ENCODE measurements at regions of chr13 and their contacts with region 1.

Region 1: GRCh38 chr13:75384879-75385707 is 96.9 kb downstream of the TBC1D4 start:
- DNase-seq: no peak
- ATAC-seq: no peak
- H3K4me3 Mint-ChIP-seq: no peak overlapping the region
- H3K27ac Mint-ChIP-seq: no peak overlapping the region
- H3K4me1 Mint-ChIP-seq: peaks cover 16% of the 10 kb centered on the region
- H3K27me3 Mint-ChIP-seq: peaks cover 3% of the 10 kb centered on the region

Region 2: DNA sequence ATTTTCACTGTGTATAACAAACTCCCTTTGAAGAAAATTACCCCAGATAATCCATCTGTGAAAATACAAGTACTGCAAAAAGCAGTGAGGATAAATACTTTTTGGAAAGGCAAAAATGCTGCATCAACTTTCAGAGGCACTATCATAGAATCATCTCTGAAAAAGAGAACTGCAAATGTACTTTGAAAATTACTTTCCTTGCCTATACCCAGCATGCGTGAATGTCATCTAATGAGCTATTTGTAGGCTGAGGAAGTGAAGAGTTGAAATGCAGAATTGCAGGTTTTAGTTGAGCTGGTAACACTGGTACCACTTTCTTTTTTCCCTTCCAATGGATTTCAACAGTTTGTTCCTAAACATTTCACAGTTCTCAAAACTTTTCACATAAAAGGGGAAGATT is 99.8 kb before region 1 on chr13:
- CTCF ChIA-PET with region 1: no interaction called
- POLR2A ChIA-PET with region 1: no interaction called
- intact Hi-C with region 1: no loop called
- DNase-seq: no peak
- ATAC-seq: no peak
- H3K4me3 Mint-ChIP-seq: no peak overlapping the region
- H3K27ac Mint-ChIP-seq: no peak overlapping the region
- H3K4me1 Mint-ChIP-seq: no peaks in the 10 kb centered on the region
- H3K27me3 Mint-ChIP-seq: no peaks in the 10 kb centered on the region

Region 3: GRCh38 chr13:75372517-75372916 is 12.6 kb before region 1 on chr13:
- CTCF ChIA-PET with region 1: interaction called, 14 read pairs
- POLR2A ChIA-PET with region 1: no interaction called
- intact Hi-C with region 1: loop called in 1 of 2 experiments (anchors 2 kb)
- DNase-seq: no peak
- ATAC-seq: peak; percentile 71
- H3K4me3 Mint-ChIP-seq: no peak overlapping the region
- H3K27ac Mint-ChIP-seq: no peak overlapping the region
- H3K4me1 Mint-ChIP-seq: peaks cover 6% of the 10 kb centered on the region
- H3K27me3 Mint-ChIP-seq: no peaks in the 10 kb centered on the region

Region 4: GRCh38 chr13:75521956-75522355 is 136.9 kb after region 1 on chr13:
- CTCF ChIA-PET with region 1: no interaction called
- POLR2A ChIA-PET with region 1: no interaction called
- intact Hi-C with region 1: no loop called
- DNase-seq: no peak
- ATAC-seq: no peak
- H3K4me3 Mint-ChIP-seq: no peak overlapping the region
- H3K27ac Mint-ChIP-seq: no peak overlapping the region
- H3K4me1 Mint-ChIP-seq: peaks cover 8% of the 10 kb centered on the region
- H3K27me3 Mint-ChIP-seq: no peaks in the 10 kb centered on the region

Region 5: GRCh38 chr13:75825594-75825993 is 440.5 kb after region 1 on chr13:
- CTCF ChIA-PET with region 1: no interaction called
- POLR2A ChIA-PET with region 1: no interaction called
- intact Hi-C with region 1: no loop called
- DNase-seq: no peak
- ATAC-seq: no peak
- H3K4me3 Mint-ChIP-seq: no peak overlapping the region
- H3K27ac Mint-ChIP-seq: no peak overlapping the region
- H3K4me1 Mint-ChIP-seq: no peaks in the 10 kb centered on the region
- H3K27me3 Mint-ChIP-seq: no peaks in the 10 kb centered on the region

Measured in activated CD4-positive, alpha-beta T cell treated with anti-CD3 and anti-CD28 coated beads for 36 hours (primary cell).